Heart left ventricle (tissue), 16 donors: ENCODE measurements at regions of chr14 and their contacts with region 1.

Region 1: GRCh38 chr14:54488646-54489317 is at the start of gene GMFB:
- DNase-seq: peak; percentile 95 to 97 (median 96)
- ATAC-seq: peak; percentile 95 to 97 (median 97)
- H3K4me3 ChIP-seq: peak within 1 kb of the TSS; percentile 62 to 96 (median 82)
- H3K27ac ChIP-seq: peak within 1 kb of the TSS; percentile 87 to 99 (median 96)
- H3K4me1 ChIP-seq: peaks cover 0 to 61% (median 33%) of the 10 kb centered on the region in 12 donors
- H3K27me3 ChIP-seq: no peaks in the 10 kb centered on the region
- CTCF ChIP-seq: peak; percentile 28 to 65 (median 46)
- POLR2A ChIP-seq: peak; percentile 4 to 75
- total RNA-seq, gene GMFB: 18.8 to 35.8 (median 26.9) TPM

Region 2: DNA sequence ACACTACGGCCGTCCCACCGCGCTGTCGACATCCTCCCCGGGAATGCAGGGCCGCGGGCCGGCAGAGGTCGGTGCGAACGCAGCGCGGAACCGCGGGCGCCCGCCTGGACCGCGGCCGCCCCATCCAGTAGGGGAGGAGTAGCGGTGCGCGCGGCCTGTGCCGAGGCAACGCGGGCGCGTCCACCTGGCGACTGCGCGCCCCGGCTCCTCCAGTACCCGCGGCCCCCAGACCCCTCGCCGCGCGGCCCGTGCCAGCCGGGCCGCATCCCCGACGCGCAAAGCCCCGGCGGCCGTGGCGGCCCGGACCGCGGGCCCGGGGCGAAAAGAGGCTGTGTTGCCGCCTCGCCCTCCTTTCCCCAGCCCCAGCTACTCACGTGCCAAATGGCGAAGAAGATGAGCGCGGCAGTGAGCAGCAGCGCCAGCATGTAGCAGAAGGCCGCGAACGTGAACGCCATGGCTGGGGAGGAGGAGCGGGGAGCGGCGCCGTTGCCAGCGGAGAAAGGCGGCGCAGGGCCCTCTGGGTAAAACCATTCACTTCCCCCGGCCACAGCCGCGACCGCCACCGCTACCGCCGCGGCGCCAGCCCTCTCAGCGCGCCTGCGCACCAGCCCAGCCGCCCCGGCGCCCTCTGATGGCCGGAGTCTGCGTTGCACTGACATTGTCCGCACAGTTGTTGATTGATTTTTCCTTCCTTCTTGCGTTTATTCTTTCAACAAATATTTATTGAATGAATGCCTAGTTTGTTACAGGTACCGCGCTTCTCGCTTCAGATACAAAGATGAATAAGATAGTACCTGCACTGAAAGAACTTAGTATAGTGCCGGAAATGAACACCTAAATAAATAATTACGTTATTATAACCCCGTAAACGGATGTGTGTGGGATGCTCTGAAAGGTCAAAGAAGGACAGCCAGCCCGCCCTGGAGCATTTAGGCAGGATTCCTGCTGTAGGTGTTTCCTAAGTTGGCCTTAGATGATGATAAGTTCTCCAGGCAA is 47.6 kb before region 1 on chr14 and contains the start of gene CNIH1:
- intact Hi-C with region 1: loop called in 4 of 10 experiments (anchors 1 to 5 kb)
- DNase-seq: peak; percentile 91 to 97 (median 93)
- ATAC-seq: peak; percentile 97 to 99 (median 99)
- H3K4me3 ChIP-seq: peak within 1 kb of the TSS; percentile 57 to 99 (median 69)
- H3K27ac ChIP-seq: peak within 1 kb of the TSS; percentile 77 to 96 (median 90)
- H3K4me1 ChIP-seq: peaks cover 0 to 56% (median 21%) of the 10 kb centered on the region in 12 donors
- H3K27me3 ChIP-seq: no peaks in the 10 kb centered on the region
- CTCF ChIP-seq: peak; percentile 86 to 99 (median 96)
- POLR2A ChIP-seq: peak in 1 of 2 donors; percentile 53
- total RNA-seq, gene CNIH1: 71.5 to 143 (median 94.5) TPM

Region 3: DNA sequence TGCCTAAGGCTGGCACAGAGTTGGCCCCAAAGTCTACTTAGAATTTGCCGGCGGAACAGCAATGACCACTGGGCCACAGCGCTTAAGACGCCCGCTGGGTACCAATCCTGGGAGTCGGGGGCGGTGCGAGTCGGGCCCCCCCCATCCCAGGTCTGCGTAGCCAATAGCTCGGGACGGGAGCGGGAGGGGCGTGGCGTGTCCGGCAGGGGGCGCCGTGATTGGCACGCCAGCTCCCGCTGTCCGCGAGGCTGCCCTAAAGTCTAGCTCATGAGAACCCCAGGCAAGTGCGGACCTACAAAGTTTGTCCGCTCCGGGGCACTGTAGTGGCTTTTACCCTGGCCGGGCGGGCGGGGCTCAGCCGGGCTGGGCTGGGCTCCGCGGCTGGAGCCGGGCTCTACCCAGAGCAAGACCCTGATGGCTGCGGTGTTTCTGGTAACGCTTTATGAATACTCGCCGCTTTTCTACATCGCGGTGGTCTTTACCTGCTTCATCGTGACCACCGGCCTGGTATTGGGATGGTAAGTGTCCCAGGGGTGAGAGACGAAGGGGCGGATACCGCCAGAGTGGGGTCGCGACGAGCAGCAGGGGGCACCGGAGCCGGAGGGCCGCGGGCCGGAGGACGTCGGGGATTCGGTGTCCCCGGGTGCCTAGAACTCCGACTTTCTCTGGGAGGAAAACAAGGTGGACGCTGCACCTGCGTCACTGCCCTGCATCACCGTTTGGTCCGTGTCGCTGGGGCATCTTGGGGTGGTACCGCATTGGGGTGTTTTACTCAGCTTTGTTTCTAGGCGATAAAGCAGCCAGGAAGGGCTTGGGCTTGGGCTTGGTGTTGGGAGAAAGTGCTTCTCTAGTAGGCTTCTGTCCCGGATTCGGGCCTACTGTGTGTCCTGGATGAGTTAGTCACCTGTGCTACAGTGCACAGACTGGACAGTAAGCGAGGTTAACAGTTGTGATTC is 21.0 kb after region 1 on chr14 and contains the start of gene CGRRF1:
- intact Hi-C with region 1: loop called in 2 of 10 experiments (anchors 1 to 2 kb)
- DNase-seq: peak; percentile 99 to 100 (median 99)
- ATAC-seq: peak; percentile 99 to 100 (median 99)
- H3K4me3 ChIP-seq: peak within 1 kb of the TSS; percentile 66 to 99 (median 78)
- H3K27ac ChIP-seq: peak within 1 kb of the TSS; percentile 45 to 92 (median 77)
- H3K4me1 ChIP-seq: peaks cover 0 to 44% (median 28%) of the 10 kb centered on the region in 12 donors
- H3K27me3 ChIP-seq: no peaks in the 10 kb centered on the region
- CTCF ChIP-seq: peak; percentile 70 to 95 (median 82)
- POLR2A ChIP-seq: peak in 1 of 2 donors; percentile 71
- total RNA-seq, gene CGRRF1: 10.6 to 28.2 (median 16.6) TPM